ENCODE measurements at regions of chr2 and their contacts with region 1.

Region 1: GRCh38 chr2:68467077-68467960 is at the starts of genes APLF and FBXO48:
- DNase-seq: peak; percentile 95
- H3K4me3 ChIP-seq: peak within 1 kb of the TSS; percentile 88 to 98
- H3K27ac ChIP-seq: peak within 1 kb of the TSS; percentile 72 to 86
- H3K4me1 ChIP-seq: peaks cover 0 to 12% of the 10 kb centered on the region in 2 experiments; a peak in 2 of 4 replicates
- H3K27me3 ChIP-seq: no peaks in the 10 kb centered on the region
- CTCF ChIP-seq: no peak
- EP300 ChIP-seq: no peak
- RAD21 ChIP-seq: no peak
- polyA plus RNA-seq, gene APLF: 1.1 and 1.3 TPM in 2 replicates
- polyA plus RNA-seq, gene FBXO48: 0.30 and 0.45 TPM in 2 replicates

Region 2: DNA sequence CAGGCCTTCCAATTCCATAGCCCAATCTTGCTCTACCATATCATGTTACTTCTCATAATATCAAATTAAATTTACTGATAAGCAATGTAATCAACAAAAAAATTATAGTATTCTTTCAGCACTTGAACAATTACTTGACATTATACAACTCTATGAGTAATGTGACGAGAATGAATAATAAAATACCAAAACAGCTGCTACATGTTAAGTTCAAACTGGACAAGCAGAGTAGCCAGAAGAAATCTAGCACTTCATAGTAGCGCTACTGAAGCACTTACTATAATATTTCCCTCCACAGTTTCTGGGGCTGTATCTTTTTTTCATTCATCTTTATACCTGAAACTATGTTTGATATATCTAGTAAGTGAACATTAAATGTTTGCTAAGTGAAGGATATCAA is 229.9 kb before region 1 on chr2:
- CTCF ChIA-PET with region 1: no interaction called
- POLR2A ChIA-PET with region 1: no interaction called
- DNase-seq: no peak
- H3K4me3 ChIP-seq: no peak overlapping the region
- H3K27ac ChIP-seq: peak overlapping the region in 1 of 2 experiments; percentile 22; a peak in 1 of 4 replicates
- H3K4me1 ChIP-seq: peaks cover 25 to 38% of the 10 kb centered on the region in 2 experiments; a peak in 3 of 4 replicates
- H3K27me3 ChIP-seq: no peaks in the 10 kb centered on the region
- CTCF ChIP-seq: no peak
- EP300 ChIP-seq: no peak
- RAD21 ChIP-seq: no peak

Region 3: DNA sequence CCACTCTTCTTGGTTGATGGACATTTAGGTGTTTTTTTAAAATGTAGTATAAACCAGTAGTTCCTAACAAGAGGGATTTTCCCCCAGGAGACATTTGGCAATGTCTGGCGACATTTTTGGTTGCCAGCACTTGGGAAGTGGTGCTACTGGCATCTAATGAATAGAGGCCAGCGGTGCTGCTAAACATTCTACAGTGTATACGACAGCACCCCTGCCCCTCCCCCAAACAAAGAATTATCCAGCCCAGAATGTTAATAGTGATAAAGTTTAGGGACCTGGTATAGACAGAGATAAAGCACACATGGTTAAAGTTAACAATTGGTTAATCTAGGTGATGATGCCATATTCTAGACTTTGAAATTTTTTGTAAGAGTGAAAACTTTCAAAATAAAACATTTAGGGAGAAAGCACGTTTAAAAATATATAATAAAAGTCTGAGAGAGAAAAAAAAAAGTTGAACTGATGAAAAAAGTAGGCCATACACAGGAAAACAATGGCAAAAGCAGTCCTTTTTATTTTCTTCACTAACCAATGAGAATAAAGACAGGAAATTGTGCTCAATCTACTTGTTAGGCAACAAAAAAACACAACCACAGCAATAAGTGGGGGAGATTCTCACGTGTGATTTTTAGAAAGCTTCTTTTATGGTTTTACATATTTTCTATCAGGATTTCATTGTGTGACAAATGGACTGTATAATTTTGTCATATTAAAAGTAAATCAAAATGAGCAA is 15.0 kb before region 1 on chr2:
- CTCF ChIA-PET with region 1: interaction called, 21 read pairs
- POLR2A ChIA-PET with region 1: no interaction called
- DNase-seq: no peak
- H3K4me3 ChIP-seq: no peak overlapping the region
- H3K27ac ChIP-seq: no peak overlapping the region
- H3K4me1 ChIP-seq: no peaks in the 10 kb centered on the region
- H3K27me3 ChIP-seq: no peaks in the 10 kb centered on the region
- CTCF ChIP-seq: no peak
- EP300 ChIP-seq: no peak
- RAD21 ChIP-seq: no peak

Region 4: DNA sequence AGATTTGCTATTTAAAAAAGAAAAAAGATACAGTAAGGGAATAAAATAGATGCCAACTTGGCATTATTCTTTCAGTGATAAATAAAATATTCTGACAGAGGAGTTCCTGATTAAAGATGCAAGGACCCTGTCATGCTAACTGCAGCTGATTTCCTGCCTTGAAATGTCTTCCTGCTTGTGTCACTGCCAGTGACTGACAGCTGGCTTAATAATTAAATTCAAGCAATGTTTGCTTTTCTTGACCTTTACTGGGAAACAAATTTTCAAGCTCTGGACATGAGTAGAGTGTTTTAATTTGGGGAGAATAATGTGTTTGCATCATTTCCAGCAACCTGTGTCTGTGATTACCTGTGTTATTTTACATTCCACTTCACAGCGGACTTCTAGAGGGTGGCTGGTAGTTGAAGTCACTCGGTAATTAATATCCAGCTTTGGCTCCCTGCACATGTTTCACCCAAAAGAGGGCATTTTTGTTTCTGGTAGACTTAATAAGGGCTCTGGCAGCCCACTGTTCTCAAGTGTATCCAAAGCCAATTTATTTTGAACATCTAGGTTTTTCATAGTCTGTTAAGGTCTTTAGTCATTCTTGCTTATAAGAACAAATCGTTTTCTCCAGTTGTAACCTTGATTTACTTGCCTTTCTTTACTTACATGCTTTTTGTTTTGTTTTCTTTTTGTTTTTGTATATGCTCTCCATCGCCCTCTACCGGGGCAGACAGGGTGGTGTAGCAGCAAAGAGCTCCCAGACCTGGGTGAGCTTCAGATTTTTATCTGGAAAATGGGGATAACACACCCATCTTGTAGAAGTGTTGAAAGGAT is 127.6 kb after region 1 on chr2:
- CTCF ChIA-PET with region 1: interaction called, 21 read pairs
- POLR2A ChIA-PET with region 1: interaction called, 3 read pairs
- DNase-seq: peak; percentile 48
- H3K4me3 ChIP-seq: no peak overlapping the region
- H3K27ac ChIP-seq: peak overlapping the region in 1 of 2 experiments; percentile 28; a peak in 1 of 4 replicates
- H3K4me1 ChIP-seq: peaks cover 0 to 4% of the 10 kb centered on the region in 2 experiments; a peak in 2 of 4 replicates
- H3K27me3 ChIP-seq: no peaks in the 10 kb centered on the region
- CTCF ChIP-seq: peak; percentile 92
- EP300 ChIP-seq: no peak
- RAD21 ChIP-seq: peak; percentile 57

Region 5: DNA sequence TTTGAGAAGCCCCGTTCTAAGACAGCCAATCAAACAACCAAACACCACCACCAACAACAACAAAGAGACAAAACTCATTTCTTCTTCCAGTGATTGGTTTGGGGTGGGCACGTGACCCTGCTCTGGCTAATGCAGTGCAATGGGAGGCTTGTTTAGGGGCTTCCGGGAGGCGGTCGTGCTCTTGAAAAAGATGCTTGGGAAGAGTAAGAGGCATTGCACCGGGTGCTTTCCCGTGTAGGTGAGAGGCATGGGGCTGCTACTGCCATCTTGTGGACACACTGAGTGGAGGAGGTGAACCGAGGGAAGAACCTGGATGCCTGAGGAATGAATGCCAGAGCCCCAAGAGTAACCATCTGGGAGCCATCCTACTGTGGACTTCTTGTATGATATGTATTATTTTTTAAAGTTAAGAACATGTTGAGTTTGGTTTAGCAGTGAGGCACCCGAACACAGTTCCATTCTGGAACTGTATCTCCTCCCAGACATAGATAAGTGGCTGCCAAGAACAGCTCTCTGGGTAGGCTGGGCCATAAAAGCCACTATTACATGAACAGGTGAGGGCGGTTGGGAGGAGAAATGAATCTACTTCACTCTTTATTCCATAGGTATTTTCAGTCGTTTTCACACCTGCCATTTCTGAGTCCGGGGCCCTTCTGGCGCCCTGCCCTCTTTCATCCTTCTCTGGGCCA is 248.2 kb after region 1 on chr2:
- CTCF ChIA-PET with region 1: interaction called, 54 read pairs
- POLR2A ChIA-PET with region 1: no interaction called
- DNase-seq: peak; percentile 62
- H3K4me3 ChIP-seq: no peak overlapping the region; a peak in 1 of 4 replicates
- H3K27ac ChIP-seq: no peak overlapping the region
- H3K4me1 ChIP-seq: no peaks in the 10 kb centered on the region; a peak in 1 of 4 replicates
- H3K27me3 ChIP-seq: no peaks in the 10 kb centered on the region
- CTCF ChIP-seq: peak; percentile 71
- EP300 ChIP-seq: no peak
- RAD21 ChIP-seq: peak; percentile 74

Region 6: GRCh38 chr2:68909793-68910674 is 442.7 kb after region 1 on chr2:
- CTCF ChIA-PET with region 1: interaction called, 16 read pairs
- POLR2A ChIA-PET with region 1: no interaction called
- DNase-seq: peak; percentile 70
- H3K4me3 ChIP-seq: peak overlapping the region in 1 of 2 experiments; percentile 6; a peak in 1 of 4 replicates
- H3K27ac ChIP-seq: no peak overlapping the region
- H3K4me1 ChIP-seq: peaks cover 0 to 8% of the 10 kb centered on the region in 2 experiments; a peak in 2 of 4 replicates
- H3K27me3 ChIP-seq: no peaks in the 10 kb centered on the region
- CTCF ChIP-seq: peak; percentile 92
- EP300 ChIP-seq: no peak
- RAD21 ChIP-seq: peak; percentile 96

Region 7: GRCh38 chr2:68943581-68944568 is 476.6 kb after region 1 on chr2:
- CTCF ChIA-PET with region 1: interaction called, 10 read pairs
- POLR2A ChIA-PET with region 1: no interaction called
- DNase-seq: peak; percentile 68
- H3K4me3 ChIP-seq: no peak overlapping the region
- H3K27ac ChIP-seq: no peak overlapping the region; a peak in 1 of 4 replicates
- H3K4me1 ChIP-seq: peaks cover 0 to 2% of the 10 kb centered on the region in 2 experiments; a peak in 1 of 4 replicates
- H3K27me3 ChIP-seq: no peaks in the 10 kb centered on the region
- CTCF ChIP-seq: peak; percentile 78
- EP300 ChIP-seq: no peak
- RAD21 ChIP-seq: peak; percentile 78